ENCODE measurements at regions of chr10 and their contacts with region 1.

Region 1: GRCh38 chr10:114103284-114103683 is 59.6 kb downstream of the ADRB1 start:
- DNase-seq: no peak
- H3K4me3 Mint-ChIP-seq: no peak overlapping the region
- H3K27ac Mint-ChIP-seq: no peak overlapping the region
- H3K4me1 Mint-ChIP-seq: peaks cover 24% of the 10 kb centered on the region
- H3K27me3 Mint-ChIP-seq: peaks cover 50% of the 10 kb centered on the region

Region 2: GRCh38 chr10:113704637-113705343 is 398.5 kb before region 1 on chr10:
- intact Hi-C with region 1: loop called (anchors 2 kb)
- DNase-seq: no peak
- H3K4me3 Mint-ChIP-seq: no peak overlapping the region
- H3K27ac Mint-ChIP-seq: no peak overlapping the region
- H3K4me1 Mint-ChIP-seq: peaks cover 32% of the 10 kb centered on the region
- H3K27me3 Mint-ChIP-seq: no peaks in the 10 kb centered on the region

Region 3: DNA sequence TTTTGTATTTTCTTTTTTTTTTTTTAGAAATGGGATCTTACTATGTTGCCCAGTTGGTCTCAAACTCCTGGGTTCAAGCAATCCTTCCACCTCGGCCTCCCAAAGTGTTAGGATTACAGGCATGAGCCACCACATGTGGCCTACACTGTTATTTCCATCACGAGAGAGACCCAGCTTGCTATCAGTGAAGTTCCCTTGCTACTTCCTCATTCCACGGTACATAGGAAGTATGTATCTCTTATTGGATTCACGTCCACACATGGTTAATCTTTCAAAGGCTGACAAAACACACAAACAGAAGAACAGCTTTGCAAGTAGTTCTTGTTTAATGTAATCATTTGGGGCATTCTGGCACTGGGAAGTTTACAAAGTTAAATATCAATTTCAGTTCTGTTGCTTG is 300.3 kb before region 1 on chr10:
- intact Hi-C with region 1: loop called (anchors 1 kb)
- DNase-seq: no peak
- H3K4me3 Mint-ChIP-seq: no peak overlapping the region
- H3K27ac Mint-ChIP-seq: no peak overlapping the region
- H3K4me1 Mint-ChIP-seq: peaks cover 2% of the 10 kb centered on the region
- H3K27me3 Mint-ChIP-seq: peaks cover 42% of the 10 kb centered on the region

Region 4: GRCh38 chr10:113965683-113966082 is 137.6 kb before region 1 on chr10:
- intact Hi-C with region 1: no loop called
- DNase-seq: no peak
- H3K4me3 Mint-ChIP-seq: no peak overlapping the region
- H3K27ac Mint-ChIP-seq: no peak overlapping the region
- H3K4me1 Mint-ChIP-seq: peaks cover 22% of the 10 kb centered on the region
- H3K27me3 Mint-ChIP-seq: peaks cover 12% of the 10 kb centered on the region

Measured in activated T-helper 2 cell treated with anti-CD3 and anti-CD28 coated beads, Interferon-gamma antibody, Interleukin-2, Interleukin-4, amounts not matched to agents 10 μg/mL and 5 μg/mL and 100 μg/mL, durations not matched to agents 14 hours and 24 hours and 36 hours (primary cell).